Cardiac septum (tissue), 1 donor: ENCODE measurements at regions of chr1 and their contacts with region 1.

Region 1: GRCh38 chr1:232810856-232811255 is 5.6 kb downstream of the MAP10 start:
- DNase-seq: no peak

Region 2: DNA sequence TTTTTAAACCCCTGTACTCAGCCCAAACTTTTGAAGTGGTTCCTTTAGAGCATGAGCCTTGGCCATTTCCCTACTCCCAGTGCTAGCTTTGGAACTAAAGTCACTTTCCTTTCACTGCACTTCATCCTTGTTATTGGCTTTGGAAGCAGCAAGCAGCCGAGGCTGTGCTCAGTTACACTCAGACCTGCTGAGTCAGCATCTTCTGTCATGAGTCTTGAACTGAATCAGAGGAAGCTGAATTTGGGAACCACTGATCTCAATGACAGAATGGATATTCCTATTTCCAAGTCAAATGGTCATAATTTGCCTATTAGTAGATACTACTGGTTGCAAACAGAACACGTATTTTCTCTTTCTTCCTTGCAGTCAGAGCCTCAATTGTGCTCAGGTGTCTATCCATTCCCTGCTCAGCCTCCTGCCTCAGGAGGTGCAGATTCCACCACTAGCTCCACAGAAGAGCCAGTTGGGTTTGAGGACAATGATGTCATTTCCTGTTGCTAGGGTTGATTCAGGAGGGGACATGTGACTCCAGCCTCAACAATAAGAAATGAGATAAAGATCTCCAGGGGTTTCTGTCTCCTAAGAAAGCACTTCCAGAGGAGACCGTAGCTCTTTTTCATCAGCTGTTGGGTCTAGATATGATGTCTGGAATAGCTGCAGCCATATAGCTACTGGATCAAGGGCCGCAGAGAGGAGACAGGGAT is 94.6 kb after region 1 on chr1:
- intact Hi-C with region 1: loop called (anchors 5 kb)
- DNase-seq: no peak

Region 3: DNA sequence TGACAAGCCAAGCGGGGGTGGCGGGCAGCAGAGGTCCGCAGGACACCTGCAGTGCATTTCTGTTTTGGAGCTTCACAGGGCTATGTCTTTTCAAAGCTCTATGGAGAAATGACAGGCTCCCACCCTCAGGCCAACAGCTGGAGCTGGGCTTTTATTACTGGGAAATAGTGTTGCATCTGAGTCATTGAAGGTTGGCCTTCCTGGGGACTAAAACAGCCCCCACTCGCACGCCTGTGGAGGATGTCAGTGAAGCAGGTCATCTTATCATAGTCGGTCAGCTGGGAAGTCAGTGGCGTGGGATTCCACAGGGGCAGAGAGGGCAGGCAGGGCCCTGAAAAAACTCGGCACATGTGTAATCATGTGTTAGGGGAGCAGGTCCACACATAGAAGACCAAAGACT is 194.8 kb after region 1 on chr1:
- intact Hi-C with region 1: no loop called
- DNase-seq: no peak